HCT116 (cell line): ENCODE measurements at regions of chr1 and their contacts with region 1.

Region 1: GRCh38 chr1:62746085-62746808 is 37.7 kb upstream of the ATG4C start:
- DNase-seq: peak; percentile 31
- ATAC-seq: peak; percentile 71
- H3K4me3 ChIP-seq: peak overlapping the region; percentile 13 to 20; a peak in 2 of 4 replicates
- H3K27ac ChIP-seq: no peak overlapping the region
- H3K4me1 ChIP-seq: no peaks in the 10 kb centered on the region; a peak in 1 of 4 replicates
- H3K27me3 ChIP-seq: no peaks in the 10 kb centered on the region
- CTCF ChIP-seq: peak; percentile 35 to 76 (median 72); a peak in 5 of 6 replicates
- POLR2A ChIP-seq: no peak
- RAD21 ChIP-seq: peak; percentile 88

Region 2: DNA sequence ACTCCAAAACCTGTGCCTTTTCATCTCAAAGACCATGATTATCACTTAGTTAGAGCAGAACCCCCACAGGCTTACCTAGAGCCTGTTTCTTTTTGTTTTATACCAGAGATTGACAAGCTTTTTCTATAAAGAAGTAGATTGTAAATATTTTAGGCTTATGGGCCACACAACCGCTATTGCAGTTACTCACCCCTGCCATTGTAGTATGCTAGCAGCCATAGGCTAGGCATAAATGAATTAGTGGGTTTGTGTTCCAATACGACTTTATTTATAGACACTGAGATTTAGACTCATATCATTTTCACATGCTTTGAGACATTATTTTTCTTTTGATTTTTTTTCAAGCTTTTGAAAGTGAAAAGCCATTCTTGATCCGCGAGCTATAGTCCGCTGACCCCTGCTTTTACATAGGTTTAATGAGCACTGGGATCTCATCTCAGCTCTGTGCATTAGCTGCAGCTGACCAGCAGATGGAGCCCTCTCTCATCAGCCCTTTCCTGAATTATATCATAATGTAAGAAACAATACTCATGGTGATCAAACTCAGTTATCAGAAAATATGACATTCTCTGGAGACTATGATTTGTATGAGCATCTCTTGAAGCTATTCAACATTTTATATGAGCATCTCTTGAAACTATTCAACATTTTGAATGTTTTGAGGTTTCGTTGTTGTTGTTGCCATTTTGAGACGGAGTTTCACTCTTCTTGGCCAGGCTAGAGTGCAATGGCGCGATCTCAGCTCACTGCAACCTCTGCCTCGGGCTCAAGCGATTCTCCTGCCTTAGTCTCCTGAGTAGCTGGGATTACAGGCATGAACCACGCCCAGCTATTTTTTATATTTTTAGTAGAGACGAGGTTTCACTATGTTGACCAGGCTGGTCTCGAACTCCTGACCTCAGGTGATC is 663.5 kb before region 1 on chr1:
- CTCF ChIA-PET with region 1: no interaction called
- POLR2A ChIA-PET with region 1: no interaction called
- RAD21 ChIA-PET with region 1: no interaction called
- intact Hi-C with region 1: loop called (anchors 2 kb)
- DNase-seq: no peak
- ATAC-seq: peak; percentile 91
- H3K4me3 ChIP-seq: no peak overlapping the region
- H3K27ac ChIP-seq: no peak overlapping the region
- H3K4me1 ChIP-seq: no peaks in the 10 kb centered on the region
- H3K27me3 ChIP-seq: no peaks in the 10 kb centered on the region
- CTCF ChIP-seq: peak; percentile 64 to 97 (median 95); a peak in 5 of 6 replicates
- POLR2A ChIP-seq: no peak
- RAD21 ChIP-seq: peak; percentile 57

Region 3: GRCh38 chr1:62175568-62176179 is 570.6 kb before region 1 on chr1:
- CTCF ChIA-PET with region 1: interaction called, 24 read pairs
- POLR2A ChIA-PET with region 1: no interaction called
- RAD21 ChIA-PET with region 1: interaction called in 1 of 2 experiments, 4 read pairs
- intact Hi-C with region 1: loop called (anchors 1 kb)
- DNase-seq: peak; percentile 26
- ATAC-seq: peak; percentile 81
- H3K4me3 ChIP-seq: no peak overlapping the region
- H3K27ac ChIP-seq: no peak overlapping the region
- H3K4me1 ChIP-seq: no peaks in the 10 kb centered on the region
- H3K27me3 ChIP-seq: no peaks in the 10 kb centered on the region
- CTCF ChIP-seq: peak; percentile 65 to 94 (median 83)
- POLR2A ChIP-seq: no peak
- RAD21 ChIP-seq: peak; percentile 96

Region 4: GRCh38 chr1:62294261-62294660 is 452.0 kb before region 1 on chr1:
- CTCF ChIA-PET with region 1: interaction called, 7 read pairs
- POLR2A ChIA-PET with region 1: no interaction called
- RAD21 ChIA-PET with region 1: no interaction called
- intact Hi-C with region 1: loop called (anchors 5 kb)
- DNase-seq: peak; percentile 1
- ATAC-seq: peak; percentile 87
- H3K4me3 ChIP-seq: no peak overlapping the region
- H3K27ac ChIP-seq: no peak overlapping the region
- H3K4me1 ChIP-seq: no peaks in the 10 kb centered on the region
- H3K27me3 ChIP-seq: no peaks in the 10 kb centered on the region; the same call in 1 of the 2 replicates
- CTCF ChIP-seq: peak; percentile 31 to 36 (median 33); a peak in 4 of 6 replicates
- POLR2A ChIP-seq: no peak
- RAD21 ChIP-seq: peak; percentile 56

Region 5: DNA sequence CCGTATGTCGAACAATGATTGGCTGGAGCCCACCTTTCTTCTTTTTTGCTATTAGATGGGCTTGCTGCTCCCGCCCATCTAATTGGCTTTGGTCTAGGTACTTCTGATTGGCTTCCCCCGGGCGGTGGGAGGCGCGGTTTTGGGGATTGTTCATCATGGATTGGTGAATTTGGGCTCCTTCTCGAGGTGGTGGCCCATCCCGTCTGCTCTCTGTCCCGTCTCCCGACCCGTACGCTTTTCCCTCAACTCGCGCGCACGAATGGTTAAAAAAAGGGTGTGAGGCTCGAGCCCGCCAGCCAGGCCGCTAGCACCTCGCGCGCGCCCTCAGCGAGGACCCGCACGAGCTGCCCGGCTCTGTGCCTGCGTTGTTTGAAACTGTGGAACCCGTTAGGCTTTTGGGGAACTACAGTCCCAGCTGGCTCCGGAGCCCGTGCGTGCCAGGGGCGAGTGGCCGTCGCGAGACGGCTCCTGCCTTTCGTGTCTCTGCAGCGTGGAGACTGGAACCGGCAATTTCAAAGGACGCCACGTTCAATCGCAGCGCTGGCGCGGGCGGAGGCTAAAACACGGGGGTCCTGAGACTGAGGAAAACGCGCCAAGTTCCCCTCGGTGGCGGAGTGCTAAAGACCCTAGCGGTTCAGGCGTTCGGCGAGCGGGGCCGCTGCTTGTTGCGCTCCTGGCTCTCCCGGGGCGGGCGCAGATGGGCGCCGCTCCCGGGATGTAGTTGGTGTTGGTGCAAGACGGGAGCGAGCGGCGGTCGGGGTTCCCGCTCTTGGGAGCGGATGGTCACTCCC is 309.6 kb before region 1 on chr1 and contains the start of gene USP1:
- CTCF ChIA-PET with region 1: no interaction called
- POLR2A ChIA-PET with region 1: no interaction called
- RAD21 ChIA-PET with region 1: no interaction called
- intact Hi-C with region 1: loop called (anchors 1 kb)
- DNase-seq: peak; percentile 99
- ATAC-seq: peak; percentile 88
- H3K4me3 ChIP-seq: peak within 1 kb of the TSS; percentile 93 to 98
- H3K27ac ChIP-seq: peak within 1 kb of the TSS; percentile 98
- H3K4me1 ChIP-seq: peaks cover 6 to 21% of the 10 kb centered on the region in 2 experiments; a peak in 3 of 4 replicates
- H3K27me3 ChIP-seq: no peaks in the 10 kb centered on the region
- CTCF ChIP-seq: no peak
- POLR2A ChIP-seq: peak; percentile 65
- RAD21 ChIP-seq: no peak
- total RNA-seq, gene USP1: 37.8 TPM

Region 6: GRCh38 chr1:62508187-62508758 is 238.0 kb before region 1 on chr1:
- CTCF ChIA-PET with region 1: interaction called, 43 read pairs
- POLR2A ChIA-PET with region 1: interaction called, 3 read pairs
- RAD21 ChIA-PET with region 1: interaction called in 1 of 2 experiments, 9 read pairs
- intact Hi-C with region 1: loop called (anchors 1 kb)
- DNase-seq: peak; percentile 33
- ATAC-seq: no peak
- H3K4me3 ChIP-seq: no peak overlapping the region
- H3K27ac ChIP-seq: no peak overlapping the region
- H3K4me1 ChIP-seq: no peaks in the 10 kb centered on the region
- H3K27me3 ChIP-seq: no peaks in the 10 kb centered on the region
- CTCF ChIP-seq: peak; percentile 58 to 73 (median 62); a peak in 5 of 6 replicates
- POLR2A ChIP-seq: no peak
- RAD21 ChIP-seq: peak; percentile 66